A549 (cell line): ENCODE measurements at regions of chr12 and their contacts with region 1.

Region 1: DNA sequence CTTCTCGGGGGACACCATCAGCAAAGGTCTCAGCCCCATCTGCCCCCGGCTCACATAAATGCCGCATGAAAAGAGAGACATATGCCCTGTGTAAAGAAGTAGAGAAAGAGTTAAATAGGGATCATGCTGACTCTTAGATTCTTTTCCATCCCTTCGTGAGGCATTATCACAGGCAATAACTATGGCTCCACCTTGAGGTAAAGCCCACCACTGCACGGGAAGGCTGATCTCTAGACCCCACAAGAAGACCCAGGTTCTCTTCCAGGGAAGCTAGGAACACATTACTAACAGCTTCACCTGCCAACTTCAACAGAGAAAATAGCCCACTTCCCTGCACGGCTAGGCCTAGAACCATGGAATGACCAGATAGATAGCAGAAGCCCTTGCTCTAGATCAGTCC is 14.1 kb upstream of the NOP2 start:
- DNase-seq: peak in 1 of 2 experiments; percentile 25
- ATAC-seq: peak; percentile 80 to 81
- H3K4me3 ChIP-seq: no peak overlapping the region
- H3K27ac ChIP-seq: no peak overlapping the region
- H3K4me1 ChIP-seq: no peaks in the 10 kb centered on the region
- CTCF ChIP-seq: peak; percentile 28; the same call in 2 of the 3 replicates
- EP300 ChIP-seq: no peak
- POLR2A ChIP-seq: no peak
- RAD21 ChIP-seq: peak; percentile 16 to 29; a peak in 1 of 5 replicates

Region 2: GRCh38 chr12:6183689-6184428 is 398.3 kb before region 1 on chr12:
- CTCF ChIA-PET with region 1: no interaction called
- POLR2A ChIA-PET with region 1: no interaction called
- DNase-seq: no peak
- ATAC-seq: no peak
- H3K4me3 ChIP-seq: no peak overlapping the region
- H3K27ac ChIP-seq: no peak overlapping the region
- H3K4me1 ChIP-seq: peaks cover 19% of the 10 kb centered on the region
- CTCF ChIP-seq: no peak
- EP300 ChIP-seq: no peak
- POLR2A ChIP-seq: no peak
- RAD21 ChIP-seq: no peak

Region 3: GRCh38 chr12:6563448-6564050 is 18.6 kb before region 1 on chr12:
- CTCF ChIA-PET with region 1: interaction called, 11 read pairs
- POLR2A ChIA-PET with region 1: interaction called, 9 read pairs
- DNase-seq: peak; percentile 65 to 69
- ATAC-seq: peak; percentile 55 to 64; a peak in 4 of 6 replicates
- H3K4me3 ChIP-seq: no peak overlapping the region
- H3K27ac ChIP-seq: no peak overlapping the region
- H3K4me1 ChIP-seq: peaks cover 6% of the 10 kb centered on the region; the same call in 2 of the 3 replicates
- CTCF ChIP-seq: peak; percentile 80
- EP300 ChIP-seq: no peak
- POLR2A ChIP-seq: no peak
- RAD21 ChIP-seq: peak; percentile 20 to 33; a peak in 1 of 5 replicates

Region 4: GRCh38 chr12:6605421-6606292 is 23.5 kb after region 1 on chr12:
- CTCF ChIA-PET with region 1: interaction called, 12 read pairs
- POLR2A ChIA-PET with region 1: no interaction called
- DNase-seq: peak in 1 of 2 experiments; percentile 36
- ATAC-seq: peak; percentile 14 to 37; a peak in 4 of 6 replicates
- H3K4me3 ChIP-seq: peak overlapping the region; percentile 97
- H3K27ac ChIP-seq: peak overlapping the region; percentile 93 to 99
- H3K4me1 ChIP-seq: peaks cover 37% of the 10 kb centered on the region
- CTCF ChIP-seq: no peak
- EP300 ChIP-seq: no peak
- POLR2A ChIP-seq: no peak
- RAD21 ChIP-seq: no peak

Region 5: DNA sequence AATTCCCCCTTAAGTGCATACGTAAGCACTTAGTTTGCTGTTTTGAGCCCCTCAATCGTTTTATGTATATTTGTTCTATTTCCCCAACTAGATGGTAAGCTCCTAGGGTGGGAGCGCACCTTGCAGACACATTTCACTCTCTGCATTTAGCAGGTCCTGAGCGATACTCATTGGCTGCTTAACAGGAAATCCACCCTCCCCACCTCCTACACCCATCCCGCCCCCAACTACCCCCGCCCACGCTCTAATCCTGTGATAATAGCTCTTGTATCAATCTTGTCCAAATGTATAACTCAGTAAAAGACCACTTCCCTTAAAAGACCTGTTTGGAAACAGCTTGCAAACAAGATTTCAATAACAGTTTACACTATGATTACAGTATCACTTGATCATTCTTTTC is 45.4 kb after region 1 on chr12:
- CTCF ChIA-PET with region 1: no interaction called
- POLR2A ChIA-PET with region 1: no interaction called
- DNase-seq: no peak
- ATAC-seq: no peak
- H3K4me3 ChIP-seq: no peak overlapping the region
- H3K27ac ChIP-seq: no peak overlapping the region
- H3K4me1 ChIP-seq: peaks cover 5% of the 10 kb centered on the region
- CTCF ChIP-seq: no peak
- EP300 ChIP-seq: no peak
- POLR2A ChIP-seq: no peak
- RAD21 ChIP-seq: no peak